Dendritic cell treated with granulocyte-macrophage colony-stimulating factor and Interleukin-4, amounts not matched to agents 40 ng/mL and 50 ng/mL, for 4 days (primary cell): ENCODE measurements at regions of chr2 and their contacts with region 1.

Region 1: GRCh38 chr2:197310271-197310985 is at the start of gene ANKRD44:
- H3K4me3 Mint-ChIP-seq: peak within 1 kb of the TSS; percentile 92
- H3K27ac Mint-ChIP-seq: peak within 1 kb of the TSS; percentile 95
- H3K4me1 Mint-ChIP-seq: peaks cover 46% of the 10 kb centered on the region
- H3K27me3 Mint-ChIP-seq: peaks cover 1% of the 10 kb centered on the region

Region 2: DNA sequence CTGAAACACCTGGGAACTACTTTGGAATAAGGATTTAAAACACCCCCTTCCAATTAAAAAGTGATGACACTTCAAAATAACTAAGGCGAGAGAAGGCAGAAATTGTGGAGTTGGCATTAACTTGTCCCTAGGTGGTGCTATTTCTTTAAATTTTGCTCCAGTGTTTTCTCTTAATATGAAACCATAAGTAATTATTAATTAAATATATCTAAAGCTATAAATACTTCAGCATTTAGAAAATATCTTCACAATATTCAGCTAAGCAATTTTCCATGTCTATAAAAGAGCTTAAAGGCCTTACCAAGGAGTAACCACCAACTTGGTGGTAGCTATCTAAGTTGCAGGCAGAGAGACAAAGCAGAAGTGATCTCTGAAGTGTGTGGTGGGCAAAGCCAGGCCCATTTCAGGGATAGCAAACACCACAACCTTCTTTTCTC is 197.1 kb before region 1 on chr2:
- intact Hi-C with region 1: loop called (anchors 2 kb)
- H3K4me3 Mint-ChIP-seq: no peak overlapping the region
- H3K27ac Mint-ChIP-seq: no peak overlapping the region
- H3K4me1 Mint-ChIP-seq: peaks cover 25% of the 10 kb centered on the region
- H3K27me3 Mint-ChIP-seq: no peaks in the 10 kb centered on the region

Region 3: DNA sequence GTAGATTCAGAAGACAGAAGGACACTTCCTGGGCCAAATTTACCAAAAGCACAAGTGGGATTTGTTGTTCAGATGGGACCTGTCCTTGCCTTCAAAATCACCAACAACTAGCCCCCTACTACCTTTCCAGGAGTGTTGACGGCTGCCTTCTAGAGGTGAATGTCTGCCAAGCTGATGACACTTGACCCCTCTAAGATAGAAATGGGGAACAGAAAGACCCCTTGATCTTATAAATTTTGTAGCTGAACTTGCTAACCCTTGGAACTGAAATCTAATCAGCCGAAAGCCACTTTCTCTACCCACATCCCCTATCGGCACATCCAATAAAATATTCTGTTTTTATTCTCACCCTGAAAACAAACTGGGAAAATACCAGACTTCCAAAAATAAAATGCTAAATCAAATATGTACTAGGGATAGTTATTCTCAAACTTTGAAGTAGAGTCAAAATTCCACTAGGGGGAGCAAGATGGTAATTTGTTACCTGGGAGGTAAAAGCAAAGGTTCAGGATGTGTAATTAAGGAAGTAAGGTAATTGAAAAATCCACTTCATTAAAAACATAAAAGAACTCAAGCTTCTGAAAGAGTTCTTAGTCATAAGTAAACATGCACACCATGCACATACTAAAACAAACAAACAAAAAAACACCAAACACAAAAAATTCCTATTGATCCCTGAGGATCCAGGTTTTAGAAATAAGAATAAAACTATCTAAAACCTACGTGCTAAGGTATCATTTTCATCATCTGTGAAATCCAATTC is 119.1 kb before region 1 on chr2:
- intact Hi-C with region 1: loop called (anchors 1 kb)
- H3K4me3 Mint-ChIP-seq: no peak overlapping the region
- H3K27ac Mint-ChIP-seq: no peak overlapping the region
- H3K4me1 Mint-ChIP-seq: peaks cover 43% of the 10 kb centered on the region
- H3K27me3 Mint-ChIP-seq: no peaks in the 10 kb centered on the region

Region 4: GRCh38 chr2:197255543-197255942 is 54.9 kb before region 1 on chr2:
- intact Hi-C with region 1: loop called (anchors 5 kb)
- H3K4me3 Mint-ChIP-seq: peak overlapping the region; percentile 61
- H3K27ac Mint-ChIP-seq: peak overlapping the region; percentile 79
- H3K4me1 Mint-ChIP-seq: peaks cover 63% of the 10 kb centered on the region
- H3K27me3 Mint-ChIP-seq: no peaks in the 10 kb centered on the region

Region 5: DNA sequence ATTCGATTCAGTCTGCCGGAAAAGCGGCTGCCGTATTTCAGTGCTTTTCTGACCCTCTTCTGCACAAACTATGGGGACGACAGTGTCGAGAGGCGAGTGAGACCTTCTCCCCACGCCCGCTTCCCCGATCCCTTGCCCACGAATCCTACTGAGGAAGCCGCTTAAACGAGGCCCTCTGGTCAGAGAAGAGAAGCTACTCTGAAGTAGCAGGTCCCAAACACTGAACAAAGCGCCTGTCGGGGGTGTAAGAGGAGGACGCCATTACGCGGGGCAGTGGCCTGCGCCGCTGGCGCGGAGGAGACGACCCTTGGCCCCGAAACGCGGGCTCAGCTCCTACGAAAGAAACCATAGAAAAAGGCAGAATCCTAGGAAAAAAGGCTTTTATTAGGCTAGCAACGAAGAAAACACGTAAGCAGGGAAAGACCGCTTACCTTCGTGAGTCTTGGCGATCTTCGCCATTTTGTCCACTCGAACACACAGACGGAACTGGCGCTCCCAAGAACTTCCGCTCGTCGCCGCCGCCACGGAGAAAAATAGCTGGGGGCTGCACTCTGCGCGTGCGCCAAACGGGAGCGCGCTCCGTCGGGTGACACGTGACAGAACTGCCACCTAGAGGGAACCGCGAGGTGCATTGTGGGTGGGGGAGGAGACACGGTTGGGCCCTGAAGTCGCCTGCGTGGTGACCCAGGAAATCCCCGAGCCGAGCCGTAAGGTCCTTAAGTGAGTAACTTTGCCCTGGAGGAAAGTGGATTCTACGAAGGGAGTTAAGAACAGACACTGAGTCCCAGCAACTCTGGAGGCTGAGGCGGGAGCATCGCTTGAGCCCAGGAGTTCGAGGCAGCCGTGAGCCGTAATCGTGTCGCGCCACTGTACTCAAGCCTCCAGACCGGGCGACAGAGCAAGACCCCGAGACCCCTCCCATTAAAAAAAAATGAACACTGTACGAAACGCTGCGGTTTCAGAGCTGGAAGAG is 124.4 kb after region 1 on chr2 and contains the start of gene SF3B1:
- intact Hi-C with region 1: no loop called
- H3K4me3 Mint-ChIP-seq: peak within 1 kb of the TSS; percentile 96
- H3K27ac Mint-ChIP-seq: peak within 1 kb of the TSS; percentile 99
- H3K4me1 Mint-ChIP-seq: peaks cover 42% of the 10 kb centered on the region
- H3K27me3 Mint-ChIP-seq: no peaks in the 10 kb centered on the region